Activated CD4-positive, alpha-beta memory T cell treated with anti-CD3 and anti-CD28 coated beads for 36 hours (primary cell): ENCODE measurements at regions of chr10 and their contacts with region 1.

Region 1: GRCh38 chr10:4813023-4813422 is 13.0 kb upstream of the AKR1E2 start:
- DNase-seq: no peak
- H3K4me3 Mint-ChIP-seq: no peak overlapping the region
- H3K27ac Mint-ChIP-seq: no peak overlapping the region
- H3K4me1 Mint-ChIP-seq: no peaks in the 10 kb centered on the region
- H3K27me3 Mint-ChIP-seq: peaks cover 5% of the 10 kb centered on the region

Region 2: DNA sequence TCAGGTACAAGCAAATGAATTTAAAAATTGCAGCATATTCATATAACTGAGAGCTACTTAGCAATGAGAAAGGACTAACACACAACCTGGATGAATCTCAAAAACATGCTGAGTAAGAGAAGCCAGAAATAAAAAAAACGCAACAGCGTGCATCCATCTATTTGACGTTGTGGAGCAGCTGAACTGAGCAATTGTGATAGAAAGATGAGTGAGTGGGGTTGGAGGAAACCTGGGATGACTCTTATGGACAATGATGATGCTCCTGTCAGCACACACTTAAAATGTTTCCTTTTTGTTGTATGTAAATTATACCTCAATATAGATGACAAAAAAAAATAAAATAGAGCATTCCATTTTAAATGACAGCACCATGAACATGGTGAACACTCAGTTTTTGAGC is 23.0 kb before region 1 on chr10:
- CTCF ChIA-PET with region 1: no interaction called
- POLR2A ChIA-PET with region 1: no interaction called
- intact Hi-C with region 1: no loop called
- DNase-seq: no peak
- H3K4me3 Mint-ChIP-seq: no peak overlapping the region
- H3K27ac Mint-ChIP-seq: no peak overlapping the region
- H3K4me1 Mint-ChIP-seq: no peaks in the 10 kb centered on the region
- H3K27me3 Mint-ChIP-seq: peaks cover 15% of the 10 kb centered on the region

Region 3: GRCh38 chr10:4826666-4827324 is 13.8 kb after region 1 on chr10:
- CTCF ChIA-PET with region 1: interaction called, 19 read pairs
- POLR2A ChIA-PET with region 1: no interaction called
- intact Hi-C with region 1: no loop called
- DNase-seq: no peak
- H3K4me3 Mint-ChIP-seq: peak overlapping the region; percentile 71
- H3K27ac Mint-ChIP-seq: peak overlapping the region; percentile 25
- H3K4me1 Mint-ChIP-seq: peaks cover 18% of the 10 kb centered on the region
- H3K27me3 Mint-ChIP-seq: peaks cover 12% of the 10 kb centered on the region

Region 4: GRCh38 chr10:4839401-4839800 is 26.4 kb after region 1 on chr10:
- CTCF ChIA-PET with region 1: interaction called, 34 read pairs
- POLR2A ChIA-PET with region 1: no interaction called
- intact Hi-C with region 1: no loop called
- DNase-seq: no peak
- H3K4me3 Mint-ChIP-seq: no peak overlapping the region
- H3K27ac Mint-ChIP-seq: no peak overlapping the region
- H3K4me1 Mint-ChIP-seq: peaks cover 25% of the 10 kb centered on the region
- H3K27me3 Mint-ChIP-seq: no peaks in the 10 kb centered on the region

Region 5: DNA sequence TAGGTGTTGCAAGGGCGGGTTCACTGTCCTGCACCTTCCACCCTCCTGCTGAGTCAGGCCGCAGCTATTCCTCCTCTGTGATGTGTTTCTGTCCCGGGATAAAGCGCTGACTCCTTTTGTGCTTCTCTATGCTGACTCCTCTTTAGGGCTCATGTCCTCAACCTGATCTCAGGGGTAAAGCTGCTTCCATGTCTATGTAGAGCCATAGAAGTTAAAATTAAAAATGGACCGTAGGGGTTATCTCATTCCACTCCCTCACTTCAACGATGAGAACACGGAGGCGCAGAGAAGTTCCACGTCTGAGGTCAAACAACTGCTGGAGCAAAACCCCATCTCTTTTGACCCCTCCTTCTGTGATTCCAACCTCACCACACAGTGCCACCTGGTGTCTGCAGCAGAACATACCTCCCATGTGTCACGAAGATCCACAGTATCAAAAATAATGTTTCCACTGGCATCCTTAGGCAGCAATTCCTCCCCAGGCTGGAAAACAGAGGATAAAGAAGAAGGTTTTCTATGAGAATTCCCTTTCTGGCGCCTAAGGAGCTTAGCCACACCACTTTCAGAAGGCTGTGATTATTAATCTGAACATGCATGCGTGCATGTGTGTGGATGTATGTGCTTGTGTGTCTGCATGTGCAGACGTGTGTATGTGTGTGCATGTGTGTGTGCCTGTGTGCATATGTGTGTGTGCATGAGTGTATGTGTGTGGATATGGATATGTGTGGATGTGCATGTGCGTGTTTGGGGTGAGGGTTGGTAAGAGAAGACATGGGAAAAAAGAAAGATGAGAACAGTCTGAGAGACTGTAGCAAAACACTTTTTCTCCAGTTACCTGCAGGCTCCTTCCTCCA is 470.5 kb after region 1 on chr10:
- CTCF ChIA-PET with region 1: interaction called, 11 read pairs
- POLR2A ChIA-PET with region 1: no interaction called
- intact Hi-C with region 1: loop called (anchors 1 kb)
- DNase-seq: peak; percentile 78
- H3K4me3 Mint-ChIP-seq: no peak overlapping the region
- H3K27ac Mint-ChIP-seq: peak overlapping the region; percentile 83
- H3K4me1 Mint-ChIP-seq: peaks cover 34% of the 10 kb centered on the region
- H3K27me3 Mint-ChIP-seq: no peaks in the 10 kb centered on the region

Region 6: DNA sequence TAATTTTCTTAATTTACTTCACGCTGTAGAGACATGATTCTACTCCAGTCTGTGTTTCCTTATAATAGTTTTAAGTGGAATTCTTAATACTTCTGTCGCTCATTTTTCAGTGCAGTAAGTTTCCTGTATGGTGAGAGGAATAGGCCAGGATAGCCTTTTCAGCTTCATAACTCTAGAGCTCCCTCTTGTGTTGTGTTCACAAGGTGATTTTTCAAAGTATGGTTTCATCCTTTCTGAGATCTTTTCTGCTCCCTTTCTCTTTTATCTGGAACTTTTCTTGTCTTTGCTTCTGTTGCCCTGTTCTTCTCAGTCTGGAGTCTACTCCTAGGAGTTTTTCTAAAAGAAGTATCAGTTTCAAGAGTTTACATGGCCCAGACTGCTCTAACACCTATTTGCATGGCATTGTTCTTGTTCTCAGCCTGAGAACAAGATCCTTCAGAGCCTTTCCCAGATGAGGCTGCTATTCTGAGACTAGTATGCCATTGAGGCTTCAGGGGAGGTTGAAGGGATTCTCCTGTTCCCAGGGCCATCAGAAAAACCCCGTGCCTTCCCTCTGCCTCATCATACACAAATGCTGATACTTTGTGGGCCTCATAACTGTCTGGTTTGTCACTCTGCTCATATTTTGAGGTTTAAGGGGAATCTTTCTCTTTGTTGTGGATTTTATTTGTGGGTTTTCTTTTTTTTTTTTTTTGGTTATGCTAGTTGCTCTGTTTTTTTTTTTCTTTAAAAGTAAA is 621.2 kb after region 1 on chr10:
- CTCF ChIA-PET with region 1: interaction called, 28 read pairs
- POLR2A ChIA-PET with region 1: no interaction called
- intact Hi-C with region 1: loop called (anchors 2 kb)
- DNase-seq: no peak
- H3K4me3 Mint-ChIP-seq: no peak overlapping the region
- H3K27ac Mint-ChIP-seq: no peak overlapping the region
- H3K4me1 Mint-ChIP-seq: peaks cover 17% of the 10 kb centered on the region
- H3K27me3 Mint-ChIP-seq: no peaks in the 10 kb centered on the region